Mammary epithelial cell (primary cell): ENCODE measurements at regions of chr7 and their contacts with region 1.

Region 1: GRCh38 chr7:50766106-50766848 is 16.4 kb downstream of the GRB10 start:
- DNase-seq: no peak
- H3K4me3 ChIP-seq: no peak overlapping the region
- H3K27ac ChIP-seq: no peak overlapping the region
- H3K4me1 ChIP-seq: no peaks in the 10 kb centered on the region
- H3K27me3 ChIP-seq: no peaks in the 10 kb centered on the region
- CTCF ChIP-seq: no peak

Region 2: GRCh38 chr7:50653126-50653864 is 113.0 kb before region 1 on chr7:
- CTCF ChIA-PET with region 1: no interaction called
- dilution Hi-C with region 1: no loop called
- in situ Hi-C with region 1: no loop called
- intact Hi-C with region 1: no loop called
- DNase-seq: no peak
- H3K4me3 ChIP-seq: no peak overlapping the region
- H3K27ac ChIP-seq: no peak overlapping the region
- H3K4me1 ChIP-seq: peaks cover 28% of the 10 kb centered on the region
- H3K27me3 ChIP-seq: peaks cover 5% of the 10 kb centered on the region
- CTCF ChIP-seq: no peak

Region 3: GRCh38 chr7:50751146-50751545 is 15.1 kb before region 1 on chr7:
- CTCF ChIA-PET with region 1: no interaction called
- dilution Hi-C with region 1: no loop called
- in situ Hi-C with region 1: no loop called
- intact Hi-C with region 1: loop called (anchors 1 kb)
- DNase-seq: no peak
- H3K4me3 ChIP-seq: no peak overlapping the region
- H3K27ac ChIP-seq: no peak overlapping the region
- H3K4me1 ChIP-seq: no peaks in the 10 kb centered on the region
- H3K27me3 ChIP-seq: no peaks in the 10 kb centered on the region
- CTCF ChIP-seq: no peak